ENCODE measurements at regions of chr17 and their contacts with region 1.

Region 1: GRCh38 chr17:1716076-1716995 is 6.2 kb upstream of the TLCD2 start:
- DNase-seq: peak; percentile 100
- CTCF ChIP-seq: peak; percentile 14

Region 2: DNA sequence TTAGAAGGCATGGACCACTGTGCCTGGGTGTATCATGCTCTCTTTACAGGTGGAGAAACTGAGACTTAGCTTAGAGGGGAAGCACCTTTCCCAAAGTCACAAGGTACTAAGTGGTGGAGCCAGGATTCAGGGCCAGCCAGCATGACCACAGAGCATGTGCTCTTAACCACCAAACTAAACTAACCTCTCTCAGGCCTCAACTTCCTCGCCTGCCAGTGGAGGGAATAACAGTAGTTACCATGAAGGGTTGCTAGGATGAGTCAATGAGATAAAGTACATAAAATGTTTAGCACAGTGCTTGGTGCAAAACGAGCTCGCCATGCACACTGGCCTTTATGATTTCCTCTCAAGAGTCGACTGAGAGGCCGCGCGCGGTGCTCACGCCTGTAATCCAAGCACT is 217.5 kb before region 1 on chr17:
- in situ Hi-C with region 1: no loop called
- DNase-seq: no peak
- CTCF ChIP-seq: no peak

Region 3: DNA sequence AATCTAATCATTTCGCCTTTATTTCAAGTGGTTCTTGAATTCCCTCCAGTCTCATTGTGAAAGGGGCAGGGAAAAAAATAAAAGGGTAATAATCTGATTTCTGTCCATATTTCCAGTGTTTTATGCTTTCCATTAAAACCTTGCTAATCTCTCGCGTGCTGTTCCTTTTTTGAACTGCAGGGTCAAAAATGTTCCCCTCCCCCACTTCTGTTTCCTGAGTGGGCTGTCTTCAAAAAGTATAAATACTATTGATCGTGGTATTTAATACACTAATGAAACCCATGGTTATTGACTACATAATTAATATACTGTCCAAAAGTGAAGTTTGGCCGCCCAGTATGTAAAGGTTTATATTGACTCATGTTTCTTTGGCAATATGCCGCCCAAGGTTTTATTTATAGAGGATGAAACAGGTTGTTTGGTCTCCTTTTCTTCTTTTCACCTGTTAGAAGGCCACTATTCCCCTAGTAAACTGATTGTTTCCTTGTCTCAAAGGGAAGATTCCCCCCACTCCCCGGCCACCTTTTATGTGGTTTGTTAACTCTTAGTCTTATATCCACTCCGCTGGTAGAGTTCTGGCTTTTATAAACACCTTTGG is 183.2 kb after region 1 on chr17:
- in situ Hi-C with region 1: no loop called
- DNase-seq: no peak
- CTCF ChIP-seq: no peak

Region 4: DNA sequence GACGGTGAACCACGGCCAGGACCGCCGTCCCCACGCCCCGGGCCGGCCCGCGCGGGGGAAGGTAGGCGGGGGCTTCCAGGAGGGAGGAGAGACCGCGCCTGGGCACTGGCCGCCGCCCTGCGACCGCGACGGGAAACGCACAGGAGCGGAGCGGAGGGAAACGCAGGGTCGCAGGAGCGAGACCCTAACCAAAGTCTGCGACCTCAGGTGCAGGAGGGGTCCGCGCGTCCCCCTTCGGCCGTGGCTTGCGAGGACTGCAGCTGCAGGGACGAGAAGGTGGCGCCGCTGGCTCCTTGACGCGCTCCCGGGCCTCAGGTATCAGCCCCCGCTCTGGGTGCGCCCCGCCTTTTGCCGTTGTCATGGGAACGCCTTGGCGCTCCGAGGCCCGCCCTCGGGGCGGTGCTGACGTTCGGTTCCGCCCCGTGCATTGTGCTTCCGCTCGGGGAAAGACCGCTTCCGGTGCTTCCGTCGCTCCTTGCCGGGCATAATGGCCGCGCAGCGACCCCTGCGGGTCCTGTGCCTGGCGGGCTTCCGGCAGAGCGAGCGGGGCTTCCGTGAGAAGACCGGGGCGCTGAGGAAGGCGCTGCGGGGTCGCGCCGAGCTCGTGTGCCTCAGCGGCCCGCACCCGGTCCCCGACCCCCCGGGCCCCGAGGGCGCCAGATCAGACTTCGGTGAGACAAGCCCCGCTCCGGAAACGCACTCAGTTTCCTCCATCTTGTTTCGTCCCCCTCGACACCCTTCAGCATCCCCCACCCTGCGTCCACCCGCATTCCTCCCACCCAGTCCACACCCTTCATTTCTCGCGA is 325.4 kb after region 1 on chr17 and contains the start of gene OVCA2:
- in situ Hi-C with region 1: loop called (anchors 25 kb)
- DNase-seq: peak; percentile 99
- CTCF ChIP-seq: peak; percentile 62

Measured in GM13977 (cell line).